ENCODE measurements at regions of chr6 and their contacts with region 1.

Region 1: GRCh38 chr6:41424370-41425058 is 89.1 kb downstream of the NCR2 start:
- DNase-seq: peak; percentile 80
- H3K4me3 Mint-ChIP-seq: no peak overlapping the region
- H3K27ac Mint-ChIP-seq: no peak overlapping the region
- H3K4me1 Mint-ChIP-seq: peaks cover 6% of the 10 kb centered on the region
- H3K27me3 Mint-ChIP-seq: peaks cover 38% of the 10 kb centered on the region

Region 2: GRCh38 chr6:41257369-41258195 is 166.9 kb before region 1 on chr6:
- CTCF ChIA-PET with region 1: no interaction called
- POLR2A ChIA-PET with region 1: no interaction called
- DNase-seq: no peak
- H3K4me3 Mint-ChIP-seq: no peak overlapping the region
- H3K27ac Mint-ChIP-seq: no peak overlapping the region
- H3K4me1 Mint-ChIP-seq: peaks cover 4% of the 10 kb centered on the region
- H3K27me3 Mint-ChIP-seq: peaks cover 36% of the 10 kb centered on the region

Region 3: DNA sequence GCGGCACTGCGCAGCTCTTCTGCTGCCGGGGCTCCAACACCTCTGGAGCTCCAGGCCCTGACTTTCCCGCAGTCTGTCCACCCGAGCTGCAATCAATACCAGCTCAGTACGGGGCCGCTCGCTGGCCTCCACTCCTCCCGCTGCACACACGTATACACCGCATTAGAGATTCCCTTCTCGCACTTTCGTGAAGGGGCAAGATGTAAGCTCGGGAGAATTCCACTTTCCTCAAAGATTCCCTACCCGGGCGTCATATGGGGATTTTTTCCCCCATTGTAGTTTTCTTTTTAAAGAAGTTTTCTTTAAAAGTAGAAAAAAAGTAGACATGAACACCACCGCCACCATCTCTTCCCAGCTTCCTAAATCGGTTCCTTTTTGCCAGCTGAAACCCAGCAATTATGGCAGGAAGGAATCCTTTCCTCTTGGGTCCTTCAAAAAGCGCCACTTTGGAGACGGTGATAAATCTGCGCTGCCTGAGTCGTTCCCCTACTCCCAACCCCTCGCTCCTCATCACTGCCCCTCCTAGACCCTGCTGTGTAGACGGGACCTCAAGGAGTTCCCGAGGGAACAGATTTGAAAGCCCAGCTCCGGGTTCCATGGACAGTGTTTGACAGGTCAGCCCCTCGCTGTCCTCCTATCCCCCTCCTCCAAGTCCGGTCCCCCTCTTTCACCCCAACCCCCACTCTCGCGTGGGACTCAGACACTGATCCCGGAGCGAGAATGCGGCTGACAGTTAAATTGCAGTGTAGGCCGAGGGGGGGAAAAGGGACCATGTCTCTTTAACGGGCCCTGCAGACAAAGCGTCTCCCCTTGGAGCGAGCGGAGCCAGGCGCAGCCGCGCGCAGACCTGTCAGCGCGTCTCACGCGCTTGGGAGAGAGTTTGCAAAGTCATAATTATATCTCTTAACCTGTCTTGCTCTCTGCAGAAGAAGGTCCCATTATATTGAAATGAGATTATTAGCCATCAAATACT is 49.6 kb before region 1 on chr6:
- CTCF ChIA-PET with region 1: no interaction called
- POLR2A ChIA-PET with region 1: no interaction called
- DNase-seq: no peak
- H3K4me3 Mint-ChIP-seq: no peak overlapping the region
- H3K27ac Mint-ChIP-seq: no peak overlapping the region
- H3K4me1 Mint-ChIP-seq: peaks cover 29% of the 10 kb centered on the region
- H3K27me3 Mint-ChIP-seq: peaks cover 88% of the 10 kb centered on the region

Region 4: GRCh38 chr6:41406728-41407489 is 17.6 kb before region 1 on chr6:
- CTCF ChIA-PET with region 1: no interaction called
- POLR2A ChIA-PET with region 1: no interaction called
- DNase-seq: no peak
- H3K4me3 Mint-ChIP-seq: no peak overlapping the region
- H3K27ac Mint-ChIP-seq: no peak overlapping the region
- H3K4me1 Mint-ChIP-seq: no peaks in the 10 kb centered on the region
- H3K27me3 Mint-ChIP-seq: peaks cover 20% of the 10 kb centered on the region

Region 5: DNA sequence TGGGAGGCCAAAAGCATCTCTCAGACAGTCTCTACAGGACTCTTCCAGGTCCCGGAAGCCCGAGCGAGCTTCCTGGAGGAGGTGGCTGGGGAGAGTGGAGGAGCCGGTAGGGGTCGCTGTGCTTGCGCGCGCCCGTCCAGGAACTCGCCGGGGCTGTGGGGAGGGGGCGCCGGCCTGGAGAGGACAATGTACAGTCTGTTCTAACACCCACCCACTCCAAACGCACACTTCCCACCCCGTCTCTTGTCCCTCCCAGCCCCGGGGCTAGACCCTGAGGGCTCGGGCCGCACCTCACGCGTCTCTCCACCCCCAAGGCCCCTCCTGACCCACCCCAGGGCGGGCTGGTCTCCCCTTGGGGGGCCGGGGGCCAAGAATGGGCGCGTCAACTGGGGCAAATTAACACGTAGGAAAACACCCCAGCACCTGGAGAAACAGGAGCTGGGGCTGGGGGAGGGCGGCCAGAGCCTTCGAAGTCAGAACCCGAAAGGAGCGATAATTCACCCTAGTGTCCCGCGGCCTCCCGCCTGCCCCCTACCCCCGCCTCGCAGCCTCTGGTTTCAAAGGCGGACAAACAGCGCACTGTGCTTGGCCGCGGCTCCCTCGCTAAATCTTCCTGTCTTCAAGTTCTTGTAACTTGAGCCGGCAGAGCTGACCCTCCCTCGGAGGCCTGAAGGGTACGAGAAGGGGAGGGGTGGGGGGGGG is 18.4 kb after region 1 on chr6:
- CTCF ChIA-PET with region 1: interaction called, 16 read pairs
- POLR2A ChIA-PET with region 1: no interaction called
- DNase-seq: no peak
- H3K4me3 Mint-ChIP-seq: no peak overlapping the region
- H3K27ac Mint-ChIP-seq: no peak overlapping the region
- H3K4me1 Mint-ChIP-seq: peaks cover 39% of the 10 kb centered on the region
- H3K27me3 Mint-ChIP-seq: peaks cover 32% of the 10 kb centered on the region

Region 6: GRCh38 chr6:41591859-41592502 is 167.5 kb after region 1 on chr6:
- CTCF ChIA-PET with region 1: interaction called, 16 read pairs
- POLR2A ChIA-PET with region 1: no interaction called
- DNase-seq: peak; percentile 80
- H3K4me3 Mint-ChIP-seq: no peak overlapping the region
- H3K27ac Mint-ChIP-seq: no peak overlapping the region
- H3K4me1 Mint-ChIP-seq: no peaks in the 10 kb centered on the region
- H3K27me3 Mint-ChIP-seq: no peaks in the 10 kb centered on the region